Mammary epithelial cell (primary cell): ENCODE measurements at regions of chr15 and their contacts with region 1.

Region 1: GRCh38 chr15:82046666-82047452 is 1.0 kb upstream of the MEX3B start:
- DNase-seq: peak; percentile 83
- H3K4me3 ChIP-seq: peak overlapping the region; percentile 73 to 90 (median 81)
- H3K27ac ChIP-seq: no peak overlapping the region
- H3K4me1 ChIP-seq: peaks cover 11% of the 10 kb centered on the region
- H3K27me3 ChIP-seq: no peaks in the 10 kb centered on the region
- CTCF ChIP-seq: peak; percentile 33 to 65

Region 2: DNA sequence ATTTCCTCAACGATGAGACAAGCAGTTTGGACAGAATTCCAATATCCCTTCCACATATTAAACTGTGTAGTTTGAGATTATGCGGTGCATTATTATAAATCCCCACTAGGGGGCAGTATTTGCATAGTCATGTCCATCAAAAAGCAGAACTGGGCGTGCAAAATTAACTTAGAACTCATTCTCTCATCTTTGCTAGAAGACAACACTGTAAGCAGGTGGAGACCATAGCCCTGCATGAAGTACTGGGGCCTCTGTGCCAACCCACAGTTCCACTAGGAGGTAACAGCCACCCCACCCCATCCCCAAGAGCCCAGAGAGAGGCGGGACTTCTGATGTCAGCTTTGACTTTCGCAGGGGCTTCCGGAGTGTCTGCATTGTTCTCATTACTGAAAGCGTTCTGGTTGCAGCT is 566.2 kb before region 1 on chr15:
- CTCF ChIA-PET with region 1: no interaction called
- dilution Hi-C with region 1: no loop called
- in situ Hi-C with region 1: no loop called
- intact Hi-C with region 1: loop called (anchors 1 kb)
- DNase-seq: peak; percentile 27
- H3K4me3 ChIP-seq: no peak overlapping the region
- H3K27ac ChIP-seq: no peak overlapping the region
- H3K4me1 ChIP-seq: no peaks in the 10 kb centered on the region
- H3K27me3 ChIP-seq: no peaks in the 10 kb centered on the region
- CTCF ChIP-seq: peak; percentile 63 to 78

Region 3: GRCh38 chr15:81809543-81809942 is 237.3 kb before region 1 on chr15:
- CTCF ChIA-PET with region 1: no interaction called
- dilution Hi-C with region 1: no loop called
- in situ Hi-C with region 1: no loop called
- intact Hi-C with region 1: loop called (anchors 10 kb)
- DNase-seq: no peak
- H3K4me3 ChIP-seq: no peak overlapping the region
- H3K27ac ChIP-seq: no peak overlapping the region
- H3K4me1 ChIP-seq: no peaks in the 10 kb centered on the region
- H3K27me3 ChIP-seq: no peaks in the 10 kb centered on the region
- CTCF ChIP-seq: peak in 1 of 2 donors; percentile 29

Region 4: DNA sequence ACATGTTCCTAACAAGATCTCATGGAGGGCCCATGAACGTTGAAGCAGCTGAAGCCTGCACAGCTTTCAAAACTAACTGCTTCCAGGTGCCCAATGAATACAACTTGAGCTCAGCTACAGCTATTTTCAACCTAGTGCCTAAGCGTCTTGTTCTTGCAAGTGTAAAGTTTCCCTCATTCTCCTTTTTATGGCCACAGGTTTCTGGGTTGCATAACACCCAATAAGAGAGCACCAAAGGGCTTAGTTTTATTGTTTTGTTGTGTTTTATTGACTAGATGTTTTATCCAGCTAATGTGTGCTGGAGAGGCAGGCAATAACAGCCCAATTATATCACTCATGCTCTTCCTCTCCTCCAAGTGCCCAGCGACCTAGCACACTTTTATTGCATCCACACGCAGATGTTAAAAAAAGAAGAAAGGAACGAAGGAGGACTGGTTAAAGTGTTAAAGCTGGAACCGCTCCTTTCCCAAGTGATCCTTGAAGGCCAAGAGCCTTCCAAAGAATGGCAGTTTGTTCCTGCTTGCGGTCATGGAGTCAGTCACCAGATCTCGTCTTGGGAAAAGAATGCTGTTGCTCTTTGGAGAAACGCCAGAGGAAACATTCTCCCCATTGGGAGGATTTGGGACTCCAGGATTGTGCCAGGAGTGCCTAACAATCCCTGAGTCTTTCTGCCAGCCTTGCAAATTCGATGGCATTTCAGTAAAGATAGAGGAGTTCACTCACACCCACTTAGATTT is 157.9 kb before region 1 on chr15:
- CTCF ChIA-PET with region 1: no interaction called
- dilution Hi-C with region 1: no loop called
- in situ Hi-C with region 1: no loop called
- intact Hi-C with region 1: no loop called
- DNase-seq: no peak
- H3K4me3 ChIP-seq: no peak overlapping the region
- H3K27ac ChIP-seq: no peak overlapping the region
- H3K4me1 ChIP-seq: peaks cover 21% of the 10 kb centered on the region
- H3K27me3 ChIP-seq: no peaks in the 10 kb centered on the region
- CTCF ChIP-seq: no peak

Region 5: DNA sequence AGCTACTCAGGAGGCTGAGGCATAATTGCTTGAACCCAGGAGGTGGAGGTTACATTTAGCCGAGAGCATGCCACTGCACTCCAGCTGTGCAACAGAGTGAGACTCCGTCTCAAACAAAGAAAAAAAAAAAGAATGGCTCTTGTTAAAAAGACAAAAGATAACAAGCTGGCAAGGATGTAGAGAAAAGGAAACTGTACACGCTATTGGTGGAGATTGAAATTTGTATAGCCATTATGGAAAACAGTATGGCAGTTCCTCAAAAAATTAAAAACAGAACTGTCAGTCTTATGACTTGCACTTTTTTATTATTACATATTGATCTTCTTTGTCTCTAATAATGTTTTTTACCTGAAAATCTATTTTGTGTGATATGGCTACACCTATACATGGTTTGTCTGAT is 42.9 kb before region 1 on chr15:
- CTCF ChIA-PET with region 1: interaction called, 17 read pairs
- dilution Hi-C with region 1: no loop called
- in situ Hi-C with region 1: no loop called
- intact Hi-C with region 1: no loop called
- DNase-seq: no peak
- H3K4me3 ChIP-seq: no peak overlapping the region
- H3K27ac ChIP-seq: no peak overlapping the region
- H3K4me1 ChIP-seq: no peaks in the 10 kb centered on the region
- H3K27me3 ChIP-seq: no peaks in the 10 kb centered on the region
- CTCF ChIP-seq: no peak

Region 6: DNA sequence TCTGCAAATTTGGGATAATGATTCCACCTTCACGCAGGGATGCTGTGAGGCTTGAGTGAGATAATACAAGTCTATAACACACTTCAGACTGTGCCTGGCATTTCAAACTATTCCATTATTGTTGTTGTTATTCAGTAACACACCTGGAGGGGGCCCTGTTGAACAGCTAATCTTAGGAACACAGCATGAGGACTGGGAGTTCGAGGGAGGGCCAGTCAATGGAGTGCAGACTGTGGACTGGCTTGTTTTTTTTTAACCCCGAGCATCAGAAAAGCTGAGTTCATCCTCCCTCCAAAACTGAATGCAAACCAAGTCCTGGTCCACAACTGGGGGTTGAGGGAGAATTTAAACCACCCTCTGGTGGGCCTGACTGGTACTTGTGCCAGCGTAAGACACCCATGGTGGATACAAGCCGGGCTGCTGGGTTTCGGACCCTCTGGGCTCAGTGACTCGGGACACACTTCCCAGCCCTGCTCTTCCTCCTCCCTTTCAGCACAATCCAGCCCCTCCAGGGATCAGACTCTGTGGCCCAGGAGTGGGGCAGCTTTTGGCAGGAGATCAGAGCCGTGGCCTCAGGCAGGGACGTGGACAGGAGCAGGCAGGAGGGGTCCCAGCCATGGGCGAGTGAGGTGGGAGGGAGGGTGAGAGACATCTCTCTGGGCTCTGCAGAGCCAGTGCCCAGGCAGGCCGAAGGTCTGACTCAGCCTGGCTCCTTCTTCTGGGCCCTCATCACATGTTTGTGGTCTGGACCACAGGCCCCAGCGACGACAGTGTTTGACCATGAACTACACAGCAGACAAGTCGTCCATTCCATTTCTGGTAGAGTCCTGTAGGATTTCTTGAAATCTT is 35.3 kb after region 1 on chr15:
- CTCF ChIA-PET with region 1: no interaction called
- dilution Hi-C with region 1: no loop called
- in situ Hi-C with region 1: no loop called
- intact Hi-C with region 1: no loop called
- DNase-seq: peak; percentile 69
- H3K4me3 ChIP-seq: no peak overlapping the region
- H3K27ac ChIP-seq: no peak overlapping the region
- H3K4me1 ChIP-seq: peaks cover 6% of the 10 kb centered on the region
- H3K27me3 ChIP-seq: no peaks in the 10 kb centered on the region
- CTCF ChIP-seq: peak; percentile 12 to 20